PC-9 (cell line): ENCODE measurements at regions of chr1 and their contacts with region 1.

Region 1: GRCh38 chr1:24558902-24559791 is 3.3 kb downstream of the NCMAP start:
- DNase-seq: peak; percentile 75 to 87
- H3K4me3 ChIP-seq: no peak overlapping the region
- H3K27ac ChIP-seq: no peak overlapping the region
- H3K4me1 ChIP-seq: peaks cover 21% of the 10 kb centered on the region
- H3K27me3 ChIP-seq: peaks cover 3% of the 10 kb centered on the region
- CTCF ChIP-seq: no peak

Region 2: GRCh38 chr1:24536391-24536840 is 22.7 kb before region 1 on chr1:
- CTCF ChIA-PET with region 1: no interaction called
- POLR2A ChIA-PET with region 1: no interaction called
- intact Hi-C with region 1: no loop called
- DNase-seq: peak in 1 of 2 experiments; percentile 8
- H3K4me3 ChIP-seq: no peak overlapping the region
- H3K27ac ChIP-seq: no peak overlapping the region
- H3K4me1 ChIP-seq: peaks cover 18% of the 10 kb centered on the region
- H3K27me3 ChIP-seq: no peaks in the 10 kb centered on the region
- CTCF ChIP-seq: no peak

Region 3: GRCh38 chr1:24642481-24643361 is 83.6 kb after region 1 on chr1 and contains the start of gene SRRM1:
- CTCF ChIA-PET with region 1: no interaction called
- POLR2A ChIA-PET with region 1: no interaction called
- intact Hi-C with region 1: loop called (anchors 5 kb)
- DNase-seq: peak; percentile 94 to 97
- H3K4me3 ChIP-seq: peak within 1 kb of the TSS; percentile 70
- H3K27ac ChIP-seq: peak within 1 kb of the TSS; percentile 96
- H3K4me1 ChIP-seq: peaks cover 15% of the 10 kb centered on the region
- H3K27me3 ChIP-seq: no peaks in the 10 kb centered on the region
- CTCF ChIP-seq: no peak
- total RNA-seq, gene SRRM1: 111 and 124 TPM in 2 replicates